PC-9 (cell line): ENCODE measurements at regions of chr15 and their contacts with region 1.

Region 1: DNA sequence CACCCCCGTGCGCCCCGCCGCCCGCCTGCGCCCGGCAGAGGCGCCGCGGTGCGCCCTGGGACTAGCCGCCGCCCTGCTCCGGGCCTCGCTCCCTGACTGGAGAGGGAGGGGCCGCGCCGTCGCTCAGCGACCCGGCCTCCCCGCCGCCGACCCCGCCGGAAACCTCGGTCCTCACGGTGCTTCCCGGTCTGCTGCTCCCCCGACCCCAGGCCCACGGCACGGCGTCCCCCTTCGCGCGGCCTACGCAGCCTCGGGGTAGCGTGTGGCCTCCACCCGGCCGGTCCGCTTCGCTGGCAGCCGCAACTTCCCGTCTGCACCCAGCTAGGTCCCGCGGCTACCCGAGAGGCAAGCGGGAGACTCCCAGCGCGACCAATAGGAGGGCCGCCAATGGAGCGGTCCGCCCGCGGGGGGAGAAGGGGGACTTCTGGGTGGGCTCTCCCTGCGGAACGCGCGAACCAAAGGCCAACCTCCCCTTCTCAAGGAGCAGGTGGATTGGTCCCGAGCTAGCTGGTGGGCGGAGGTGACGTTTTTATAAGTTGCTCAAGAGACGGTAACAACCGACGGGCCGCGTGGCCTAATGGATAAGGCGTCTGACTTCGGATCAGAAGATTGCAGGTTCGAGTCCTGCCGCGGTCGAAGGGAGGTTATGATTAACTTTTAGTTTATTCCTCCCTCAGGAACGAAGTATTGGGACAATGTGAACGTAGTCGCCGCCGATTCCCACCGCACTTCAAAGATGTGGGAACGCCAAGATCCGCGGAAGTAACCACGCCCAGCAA is at the start of gene POLG:
- DNase-seq: peak; percentile 93 to 98
- H3K4me3 ChIP-seq: peak within 1 kb of the TSS; percentile 95
- H3K27ac ChIP-seq: peak within 1 kb of the TSS; percentile 68
- H3K4me1 ChIP-seq: peaks cover 16% of the 10 kb centered on the region
- H3K27me3 ChIP-seq: no peaks in the 10 kb centered on the region
- CTCF ChIP-seq: no peak
- total RNA-seq, gene POLG: 43.6 and 63.9 TPM in 2 replicates

Region 2: GRCh38 chr15:88897456-88898194 is 437.1 kb before region 1 on chr15:
- CTCF ChIA-PET with region 1: no interaction called
- POLR2A ChIA-PET with region 1: interaction called, 7 read pairs
- intact Hi-C with region 1: loop called (anchors 10 kb)
- DNase-seq: peak; percentile 62 to 84
- H3K4me3 ChIP-seq: no peak overlapping the region
- H3K27ac ChIP-seq: no peak overlapping the region
- H3K4me1 ChIP-seq: 0 out of 2 replicates have a peak, but pooled peaks cover 3% of the 10 kb centered on the region
- H3K27me3 ChIP-seq: peaks cover 19% of the 10 kb centered on the region; the same call in 1 of the 2 replicates
- CTCF ChIP-seq: peak; percentile 57

Region 3: GRCh38 chr15:88974392-88974791 is 360.3 kb before region 1 on chr15:
- CTCF ChIA-PET with region 1: interaction called, 11 read pairs
- POLR2A ChIA-PET with region 1: no interaction called
- intact Hi-C with region 1: no loop called
- DNase-seq: no peak
- H3K4me3 ChIP-seq: no peak overlapping the region
- H3K27ac ChIP-seq: no peak overlapping the region
- H3K4me1 ChIP-seq: no peaks in the 10 kb centered on the region
- H3K27me3 ChIP-seq: peaks cover 4% of the 10 kb centered on the region; the same call in 1 of the 2 replicates
- CTCF ChIP-seq: no peak

Region 4: GRCh38 chr15:89307791-89308190 is 26.9 kb before region 1 on chr15:
- CTCF ChIA-PET with region 1: no interaction called
- POLR2A ChIA-PET with region 1: no interaction called
- intact Hi-C with region 1: no loop called
- DNase-seq: no peak
- H3K4me3 ChIP-seq: no peak overlapping the region
- H3K27ac ChIP-seq: no peak overlapping the region
- H3K4me1 ChIP-seq: no peaks in the 10 kb centered on the region
- H3K27me3 ChIP-seq: no peaks in the 10 kb centered on the region
- CTCF ChIP-seq: no peak

Region 5: DNA sequence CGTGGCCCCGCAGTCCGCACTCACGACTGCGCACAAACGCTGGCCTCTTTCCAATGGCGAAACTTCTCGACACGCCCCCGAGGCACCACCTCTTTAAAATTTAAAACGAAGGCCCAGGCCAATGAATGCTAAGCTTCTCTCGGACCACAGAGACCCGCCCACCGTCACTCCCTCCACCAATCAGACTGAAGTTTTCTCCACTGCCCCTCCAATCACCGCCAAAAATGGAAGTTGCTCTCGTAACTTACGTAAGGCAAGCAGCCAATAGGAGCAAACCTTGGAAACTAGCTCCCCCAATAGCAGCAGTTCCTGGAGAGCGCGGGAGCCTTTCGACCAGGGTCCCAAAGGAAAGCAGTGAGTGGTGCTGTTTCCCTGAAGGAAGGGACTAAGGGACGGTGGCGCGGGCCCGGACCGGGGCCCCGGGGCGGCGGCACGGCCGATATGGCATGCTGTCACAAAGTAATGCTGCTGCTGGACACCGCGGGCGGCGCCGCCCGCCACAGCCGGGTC is 240.5 kb after region 1 on chr15 and contains the start of gene TICRR:
- CTCF ChIA-PET with region 1: no interaction called
- POLR2A ChIA-PET with region 1: no interaction called
- intact Hi-C with region 1: loop called (anchors 10 kb)
- DNase-seq: peak; percentile 96 to 99
- H3K4me3 ChIP-seq: peak within 1 kb of the TSS; percentile 71
- H3K27ac ChIP-seq: peak within 1 kb of the TSS; percentile 59
- H3K4me1 ChIP-seq: peaks cover 24% of the 10 kb centered on the region
- H3K27me3 ChIP-seq: no peaks in the 10 kb centered on the region
- CTCF ChIP-seq: no peak
- total RNA-seq, gene TICRR: 17.8 and 23.6 TPM in 2 replicates

Region 6: GRCh38 chr15:90286678-90287077 is 952.0 kb after region 1 on chr15:
- CTCF ChIA-PET with region 1: no interaction called
- POLR2A ChIA-PET with region 1: no interaction called
- intact Hi-C with region 1: no loop called
- DNase-seq: peak; percentile 35 to 39
- H3K4me3 ChIP-seq: no peak overlapping the region
- H3K27ac ChIP-seq: no peak overlapping the region
- H3K4me1 ChIP-seq: no peaks in the 10 kb centered on the region
- H3K27me3 ChIP-seq: no peaks in the 10 kb centered on the region
- CTCF ChIP-seq: peak; percentile 66